Colonic mucosa (tissue), 4 donors: ENCODE measurements at regions of chr20 and their contacts with region 1.

Region 1: DNA sequence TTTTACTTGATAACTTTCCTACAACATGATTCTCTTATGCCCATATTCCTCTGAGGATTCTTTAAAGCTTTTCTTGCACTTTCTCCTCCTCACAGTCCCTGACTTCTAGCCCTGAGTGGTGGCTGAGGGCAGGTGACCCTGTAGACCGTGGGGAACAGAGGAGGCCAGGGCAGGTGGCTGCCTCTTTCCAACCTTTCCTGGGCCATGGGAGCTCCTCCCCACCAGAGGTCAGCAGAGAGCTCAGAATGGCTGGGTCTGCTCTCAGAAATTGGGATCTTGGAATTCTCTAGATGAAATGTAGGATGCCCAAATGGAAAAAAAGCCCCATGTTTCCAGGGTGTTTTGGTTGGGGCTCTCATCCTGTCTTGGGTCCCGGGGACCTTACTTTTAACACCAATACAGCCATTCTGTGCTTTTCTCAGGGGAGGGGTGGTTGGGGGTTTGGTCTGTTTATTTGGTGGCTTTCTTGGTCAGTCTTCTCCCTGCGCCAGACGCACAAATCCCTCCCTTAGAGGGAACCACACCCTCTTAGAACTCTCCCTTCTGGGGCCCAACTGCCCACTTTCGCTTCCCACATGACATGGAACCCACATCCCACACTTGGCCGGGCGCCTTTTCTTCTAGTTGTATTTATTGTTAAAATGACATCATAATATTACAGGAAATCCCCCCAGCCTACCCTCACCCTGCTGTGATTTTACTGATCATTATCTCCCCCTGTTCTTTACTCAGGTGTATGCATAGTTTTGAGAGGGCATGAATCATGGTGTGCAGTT is 17.9 kb downstream of the GNAS start:
- DNase-seq: peak; percentile 76
- H3K4me3 ChIP-seq: no peak overlapping the region
- H3K27ac ChIP-seq: no peak overlapping the region
- H3K4me1 ChIP-seq: no peaks in the 10 kb centered on the region
- H3K27me3 ChIP-seq: no peaks in the 10 kb centered on the region
- CTCF ChIP-seq: peak; percentile 85

Region 2: DNA sequence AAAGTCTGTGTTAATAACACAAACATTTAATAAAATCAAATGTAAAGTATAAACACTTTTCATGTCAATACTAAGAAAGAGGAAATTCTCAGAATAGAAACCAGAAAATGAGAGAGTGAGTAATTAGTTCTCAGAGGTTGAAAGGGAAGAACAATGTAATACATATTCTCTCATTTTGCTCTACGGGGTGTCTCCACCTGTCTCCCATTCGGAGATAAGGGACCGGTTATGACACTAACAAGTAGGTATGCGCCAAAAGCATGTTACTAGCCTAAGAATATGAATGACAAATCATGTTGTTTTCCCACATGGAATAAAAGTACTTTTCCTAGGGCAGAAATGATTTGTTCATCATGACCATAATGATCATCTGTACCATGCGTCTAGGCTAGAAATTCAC is 207.8 kb after region 1 on chr20:
- intact Hi-C with region 1: loop called (anchors 5 kb)
- DNase-seq: no peak
- H3K4me3 ChIP-seq: no peak overlapping the region
- H3K27ac ChIP-seq: no peak overlapping the region
- H3K4me1 ChIP-seq: no peaks in the 10 kb centered on the region
- H3K27me3 ChIP-seq: no peaks in the 10 kb centered on the region
- CTCF ChIP-seq: no peak

Region 3: GRCh38 chr20:59222253-59223181 is 352.1 kb after region 1 on chr20:
- intact Hi-C with region 1: loop called (anchors 5 kb)
- DNase-seq: peak; percentile 86
- H3K4me3 ChIP-seq: peak overlapping the region; percentile 59
- H3K27ac ChIP-seq: no peak overlapping the region
- H3K4me1 ChIP-seq: no peaks in the 10 kb centered on the region
- H3K27me3 ChIP-seq: peaks cover 3% of the 10 kb centered on the region
- CTCF ChIP-seq: peak; percentile 93

Region 4: DNA sequence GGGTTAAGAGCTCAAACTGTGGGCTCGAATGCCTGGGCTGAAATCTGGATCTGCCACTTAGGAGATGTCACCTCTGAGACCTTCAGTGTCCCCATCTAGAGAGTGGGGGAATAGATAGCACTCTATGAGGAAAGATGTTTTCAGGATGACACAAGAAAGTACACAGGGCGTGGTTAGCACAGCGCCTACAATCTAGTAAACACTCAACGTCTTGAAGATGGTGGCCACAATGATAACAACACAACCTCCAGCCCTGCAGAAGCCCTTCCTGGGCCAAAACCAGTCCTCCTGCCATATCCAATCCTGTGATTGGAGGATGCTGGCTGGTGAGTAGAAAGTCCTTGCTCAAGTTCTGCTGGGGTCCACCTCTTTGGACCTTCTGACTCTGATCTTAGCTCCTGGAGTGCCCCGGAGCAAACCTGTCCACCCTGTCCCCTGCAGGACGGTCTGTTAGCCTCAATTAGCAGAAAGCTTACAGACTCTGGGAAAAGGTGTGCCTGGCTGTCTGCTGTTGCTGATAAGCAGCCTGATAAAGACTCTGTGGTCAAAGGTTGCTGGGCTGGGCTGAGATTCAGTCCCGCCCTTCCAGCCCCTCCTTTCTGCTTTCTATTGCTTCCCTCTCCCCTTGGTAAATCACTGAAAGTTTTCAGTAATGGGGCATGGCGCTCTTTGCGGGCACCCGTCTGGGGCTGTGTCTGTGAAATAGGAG is 438.2 kb after region 1 on chr20:
- intact Hi-C with region 1: no loop called
- DNase-seq: peak; percentile 90
- H3K4me3 ChIP-seq: no peak overlapping the region
- H3K27ac ChIP-seq: peak overlapping the region; percentile 89
- H3K4me1 ChIP-seq: no peaks in the 10 kb centered on the region
- H3K27me3 ChIP-seq: no peaks in the 10 kb centered on the region
- CTCF ChIP-seq: no peak

Region 5: GRCh38 chr20:59455402-59456341 is 585.2 kb after region 1 on chr20:
- intact Hi-C with region 1: loop called (anchors 5 kb)
- DNase-seq: peak; percentile 23
- H3K4me3 ChIP-seq: no peak overlapping the region
- H3K27ac ChIP-seq: no peak overlapping the region
- H3K4me1 ChIP-seq: no peaks in the 10 kb centered on the region
- H3K27me3 ChIP-seq: no peaks in the 10 kb centered on the region
- CTCF ChIP-seq: peak; percentile 43